Left cardiac atrium (tissue), 4 donors: ENCODE measurements at regions of chr3 and their contacts with region 1.

Region 1: DNA sequence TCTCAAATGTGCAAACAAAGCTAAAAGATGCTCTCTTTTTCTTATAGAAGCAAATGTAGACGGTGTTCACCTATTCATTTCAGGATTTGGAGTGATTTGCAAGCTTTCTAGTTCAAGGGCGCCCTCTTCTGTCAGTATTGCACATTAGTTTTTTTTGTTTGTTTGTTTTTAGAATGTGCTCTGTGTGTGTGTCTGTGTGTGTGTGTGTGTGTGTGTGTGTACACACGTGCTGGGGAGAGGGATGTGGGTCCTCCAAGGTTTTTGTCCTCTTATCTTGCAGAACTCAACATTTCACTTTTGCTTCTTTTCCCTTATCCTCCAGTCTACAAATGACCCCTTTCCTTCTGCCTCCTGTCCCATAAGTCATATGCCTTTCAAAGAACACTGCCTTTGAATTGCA is 23.5 kb downstream of the DNAH1 start:
- DNase-seq: no peak
- ATAC-seq: peak; percentile 24 to 44

Region 2: GRCh38 chr3:52220380-52221026 is 119.1 kb before region 1 on chr3:
- intact Hi-C with region 1: loop called in 1 of 2 experiments (anchors 5 kb)
- DNase-seq: peak; percentile 85
- ATAC-seq: peak; percentile 53 to 67

Region 3: GRCh38 chr3:52231502-52232293 is 107.9 kb before region 1 on chr3:
- intact Hi-C with region 1: loop called in 1 of 2 experiments (anchors 2 kb)
- DNase-seq: peak; percentile 73
- ATAC-seq: peak in 1 of 2 donors; percentile 34

Region 4: DNA sequence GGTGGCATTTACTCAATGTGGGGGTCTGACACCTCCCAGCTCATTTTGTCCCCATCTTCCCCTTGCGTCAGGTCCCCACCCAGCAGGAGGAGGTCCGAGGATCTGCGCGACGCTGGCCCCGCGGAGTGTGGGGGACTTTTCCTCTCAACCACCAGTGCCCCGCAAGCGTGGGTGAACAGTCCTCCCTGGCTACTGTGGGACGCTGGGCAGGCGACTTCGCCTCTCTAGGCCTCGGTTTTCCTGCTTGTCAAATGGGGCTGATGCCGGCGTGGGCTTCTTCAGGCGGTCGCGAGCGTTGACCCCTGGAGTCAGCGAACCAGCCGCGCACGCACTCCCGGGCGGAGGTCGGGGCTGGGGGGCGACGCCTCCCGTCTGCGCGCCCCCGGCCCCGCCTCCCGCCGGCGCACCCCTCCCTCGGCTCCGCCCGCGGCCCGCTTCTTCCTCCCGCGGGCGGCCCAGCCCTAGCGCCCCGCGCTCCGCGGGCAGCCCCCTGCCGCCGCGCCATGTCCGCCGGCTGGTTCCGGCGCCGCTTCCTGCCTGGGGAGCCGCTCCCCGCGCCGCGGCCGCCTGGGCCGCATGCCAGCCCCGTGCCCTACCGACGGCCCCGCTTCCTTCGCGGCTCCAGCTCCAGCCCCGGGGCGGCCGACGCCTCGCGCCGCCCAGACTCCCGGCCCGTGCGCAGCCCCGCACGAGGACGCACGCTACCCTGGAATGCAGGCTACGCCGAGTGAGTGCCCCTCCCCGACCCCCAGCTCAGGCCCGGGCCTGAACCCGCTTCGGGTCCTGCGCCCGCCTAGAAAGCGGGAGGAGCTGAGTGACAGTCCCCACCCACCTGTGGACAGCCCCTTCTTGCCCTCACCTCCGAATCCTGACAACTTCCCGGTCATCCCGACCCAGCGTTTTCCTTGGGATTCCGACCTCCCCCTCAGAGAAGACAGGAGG is 94.0 kb before region 1 on chr3 and contains the start of gene PPM1M:
- intact Hi-C with region 1: no loop called
- DNase-seq: peak; percentile 62
- ATAC-seq: peak; percentile 51 to 72
- total RNA-seq, gene PPM1M: 11.8 to 17.4 TPM

Region 5: DNA sequence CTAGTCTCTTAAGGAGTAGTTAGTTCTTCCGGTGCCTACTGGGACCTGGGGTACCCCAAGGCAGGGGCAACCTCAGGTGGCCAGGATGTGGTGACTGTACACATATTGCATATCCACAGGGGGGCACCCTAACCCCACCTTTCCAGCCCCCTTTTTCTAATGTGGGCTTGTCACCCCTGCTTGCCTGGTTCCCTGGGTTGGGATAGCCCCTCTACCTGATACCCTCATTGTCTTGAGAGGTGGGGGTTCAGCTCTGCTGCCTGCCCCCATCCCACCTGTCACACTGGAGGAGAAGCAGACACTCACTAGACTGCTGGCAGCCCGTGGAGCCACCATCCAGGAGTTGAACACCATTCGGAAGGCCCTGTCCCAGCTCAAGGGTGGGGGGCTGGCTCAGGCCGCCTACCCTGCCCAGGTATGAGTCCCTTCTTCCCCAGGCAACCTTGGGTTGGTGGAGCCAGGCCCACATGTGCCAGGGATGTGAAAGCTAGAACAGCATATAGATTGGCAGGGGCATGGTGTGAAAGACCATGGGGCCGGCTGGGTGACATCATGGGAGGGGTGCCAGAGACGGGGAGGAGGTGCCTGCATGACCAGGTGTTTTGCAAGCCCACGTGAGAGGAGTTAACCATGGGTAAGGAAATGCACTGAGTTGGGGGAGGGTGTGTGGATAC is 48.0 kb before region 1 on chr3:
- intact Hi-C with region 1: loop called (anchors 1 to 5 kb)
- DNase-seq: no peak
- ATAC-seq: no peak

Region 6: DNA sequence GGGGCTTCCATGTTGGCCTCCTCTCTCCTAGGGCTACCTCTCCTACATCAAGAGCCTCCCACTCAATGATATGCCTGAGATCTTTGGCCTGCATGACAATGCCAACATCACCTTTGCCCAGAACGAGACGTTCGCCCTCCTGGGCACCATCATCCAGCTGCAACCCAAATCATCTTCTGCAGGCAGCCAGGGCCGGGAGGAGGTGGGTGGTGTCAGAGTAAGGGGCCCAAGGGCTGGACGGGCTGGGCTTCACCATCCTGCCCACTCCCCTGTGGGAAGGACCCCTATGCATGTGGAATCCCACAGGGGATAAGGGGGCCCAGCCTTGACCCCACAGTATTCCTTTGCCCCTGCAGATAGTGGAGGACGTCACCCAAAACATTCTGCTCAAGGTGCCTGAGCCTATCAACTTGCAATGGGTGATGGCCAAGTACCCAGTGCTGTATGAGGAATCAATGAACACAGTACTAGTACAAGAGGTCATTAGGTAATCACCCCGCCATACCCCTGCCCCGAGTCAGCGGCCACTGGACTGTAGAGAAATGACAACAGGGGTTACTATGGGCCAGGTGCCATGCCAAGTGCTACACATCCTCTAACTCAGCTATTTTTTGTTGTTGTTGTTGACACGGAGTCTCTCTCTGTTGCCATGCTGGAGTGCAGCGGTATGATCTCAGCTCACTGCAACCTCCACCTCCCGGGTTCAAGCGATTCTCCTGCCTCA is 58.2 kb after region 1 on chr3:
- intact Hi-C with region 1: no loop called
- DNase-seq: no peak
- ATAC-seq: no peak